ENCODE measurements at regions of chr2 and their contacts with region 1.

Region 1: DNA sequence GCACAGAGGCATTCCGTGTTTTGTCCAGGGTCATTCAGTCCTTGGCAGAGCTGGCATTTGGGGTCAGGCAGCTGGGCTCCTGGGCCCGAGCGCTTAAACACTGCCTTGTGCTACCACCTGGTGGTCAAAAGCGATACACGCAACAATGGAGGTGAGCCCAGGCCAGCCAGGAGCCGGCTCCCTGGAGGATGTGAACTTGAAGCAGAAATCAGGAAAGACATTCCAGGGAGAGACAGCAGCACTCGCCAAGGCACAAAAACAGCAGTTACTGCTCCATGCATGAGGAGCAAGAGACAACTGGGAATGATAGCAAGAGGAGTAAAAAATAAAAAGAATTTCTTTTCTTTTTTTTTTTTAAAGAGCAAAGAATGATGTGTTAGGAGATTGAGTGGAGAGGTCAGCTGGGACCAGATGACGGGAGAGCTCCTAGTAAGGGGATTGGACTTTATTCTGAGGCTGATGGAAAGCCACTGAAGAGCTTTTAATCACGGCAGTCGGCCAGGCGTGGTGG is 20.7 kb downstream of the SCYGR8 start:
- DNase-seq: peak; percentile 57 to 64 (median 59)
- ATAC-seq: peak; percentile 98
- H3K4me3 ChIP-seq: no peak overlapping the region
- H3K27ac ChIP-seq: no peak overlapping the region
- H3K4me1 ChIP-seq: peaks cover 0 to 4% of the 10 kb centered on the region in 2 experiments; a peak in 1 of 5 replicates
- H3K27me3 ChIP-seq: peaks cover 0 to 10% of the 10 kb centered on the region in 2 experiments; a peak in 2 of 5 replicates
- CTCF ChIP-seq: peak; percentile 62 to 75 (median 66)
- EP300 ChIP-seq: no peak
- POLR2A ChIP-seq: no peak
- RAD21 ChIP-seq: peak; percentile 80 to 82

Region 2: GRCh38 chr2:227033471-227034148 is 732.8 kb before region 1 on chr2:
- CTCF ChIA-PET with region 1: no interaction called
- POLR2A ChIA-PET with region 1: no interaction called
- in situ Hi-C with region 1: no loop called
- intact Hi-C with region 1: loop called (anchors 1 kb)
- DNase-seq: peak; percentile 28 to 57 (median 38)
- ATAC-seq: peak; percentile 94
- H3K4me3 ChIP-seq: no peak overlapping the region
- H3K27ac ChIP-seq: no peak overlapping the region
- H3K4me1 ChIP-seq: no peaks in the 10 kb centered on the region
- H3K27me3 ChIP-seq: no peaks in the 10 kb centered on the region
- CTCF ChIP-seq: peak; percentile 49 to 75 (median 63)
- EP300 ChIP-seq: no peak
- POLR2A ChIP-seq: no peak
- RAD21 ChIP-seq: peak in 1 of 2 experiments; percentile 42; a peak in 2 of 4 replicates

Region 3: DNA sequence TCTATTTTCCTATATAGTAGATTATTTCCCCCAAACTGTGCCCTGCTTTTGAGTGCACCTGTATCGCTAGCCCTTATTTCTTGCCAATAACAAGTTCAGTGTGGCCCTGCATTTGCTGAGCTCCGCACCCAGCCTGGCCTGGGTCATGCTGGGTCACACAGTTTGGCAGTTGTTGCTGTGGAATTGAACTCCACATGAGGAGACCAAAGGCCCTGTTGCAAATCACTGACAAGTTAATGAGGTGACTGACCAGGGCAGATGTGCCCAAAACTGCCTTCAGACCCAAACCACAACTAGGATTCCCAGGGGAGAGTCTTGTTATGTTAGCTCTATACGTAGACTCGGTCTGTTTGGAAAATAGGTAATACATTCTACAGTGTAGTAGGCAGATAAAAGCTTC is 633.4 kb before region 1 on chr2:
- CTCF ChIA-PET with region 1: interaction called, 10 read pairs
- POLR2A ChIA-PET with region 1: no interaction called
- in situ Hi-C with region 1: no loop called
- intact Hi-C with region 1: loop called (anchors 5 kb)
- DNase-seq: no peak
- ATAC-seq: no peak
- H3K4me3 ChIP-seq: no peak overlapping the region
- H3K27ac ChIP-seq: no peak overlapping the region
- H3K4me1 ChIP-seq: no peaks in the 10 kb centered on the region
- H3K27me3 ChIP-seq: peaks cover 0 to 19% of the 10 kb centered on the region in 2 experiments; a peak in 2 of 5 replicates
- CTCF ChIP-seq: no peak
- EP300 ChIP-seq: no peak
- POLR2A ChIP-seq: no peak
- RAD21 ChIP-seq: no peak

Region 4: DNA sequence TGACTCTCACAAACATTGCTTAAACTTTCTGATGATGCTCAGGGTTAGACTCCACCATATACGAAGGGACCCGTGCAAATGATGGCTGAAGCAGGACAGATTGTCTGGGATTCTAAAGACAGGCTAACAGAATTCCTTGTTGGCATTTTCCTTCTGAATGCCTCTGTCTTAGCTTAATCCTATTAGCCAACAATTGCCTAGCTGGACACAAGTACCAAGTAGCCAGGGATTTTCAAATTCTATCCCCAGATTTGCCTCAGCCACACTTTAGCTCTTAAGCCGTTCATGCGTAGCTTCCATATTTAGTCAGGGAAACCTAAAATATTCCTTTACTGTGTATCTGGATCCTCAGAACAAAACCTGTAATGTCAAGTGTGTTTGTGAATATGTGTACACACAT is 562.0 kb before region 1 on chr2:
- CTCF ChIA-PET with region 1: no interaction called
- POLR2A ChIA-PET with region 1: no interaction called
- in situ Hi-C with region 1: no loop called
- intact Hi-C with region 1: no loop called
- DNase-seq: no peak
- ATAC-seq: no peak
- H3K4me3 ChIP-seq: no peak overlapping the region
- H3K27ac ChIP-seq: no peak overlapping the region
- H3K4me1 ChIP-seq: no peaks in the 10 kb centered on the region
- H3K27me3 ChIP-seq: no peaks in the 10 kb centered on the region
- CTCF ChIP-seq: no peak
- EP300 ChIP-seq: no peak
- POLR2A ChIP-seq: no peak
- RAD21 ChIP-seq: no peak

Region 5: DNA sequence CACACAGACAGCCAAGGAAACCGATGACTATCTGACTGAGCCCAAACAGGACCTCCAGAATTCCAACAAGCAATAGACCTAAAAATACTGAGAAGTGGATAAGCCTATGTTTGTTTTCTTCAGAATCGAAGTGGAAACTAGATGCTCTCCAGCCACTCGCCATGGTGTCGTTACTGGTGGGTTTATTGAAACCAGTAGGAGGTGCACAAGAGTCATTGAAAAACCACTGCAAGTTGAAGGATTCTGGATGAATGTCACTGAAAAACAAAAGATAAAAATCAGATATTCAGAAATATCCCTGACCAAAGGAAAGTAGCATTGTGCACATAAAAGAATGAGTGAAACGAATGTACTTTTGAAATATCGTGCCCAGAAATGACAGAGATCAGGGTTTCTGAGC is 402.7 kb before region 1 on chr2:
- CTCF ChIA-PET with region 1: interaction called, 4 read pairs
- POLR2A ChIA-PET with region 1: no interaction called
- in situ Hi-C with region 1: no loop called
- intact Hi-C with region 1: loop called (anchors 2 kb)
- DNase-seq: peak in 2 of 4 experiments; percentile 7 to 44
- ATAC-seq: peak; percentile 80
- H3K4me3 ChIP-seq: no peak overlapping the region
- H3K27ac ChIP-seq: no peak overlapping the region
- H3K4me1 ChIP-seq: no peaks in the 10 kb centered on the region
- H3K27me3 ChIP-seq: no peaks in the 10 kb centered on the region; a peak in 1 of 5 replicates
- CTCF ChIP-seq: peak; percentile 47 to 62 (median 57); a peak in 5 of 6 replicates
- EP300 ChIP-seq: no peak
- POLR2A ChIP-seq: no peak
- RAD21 ChIP-seq: peak; percentile 50 to 64; a peak in 3 of 4 replicates

Region 6: DNA sequence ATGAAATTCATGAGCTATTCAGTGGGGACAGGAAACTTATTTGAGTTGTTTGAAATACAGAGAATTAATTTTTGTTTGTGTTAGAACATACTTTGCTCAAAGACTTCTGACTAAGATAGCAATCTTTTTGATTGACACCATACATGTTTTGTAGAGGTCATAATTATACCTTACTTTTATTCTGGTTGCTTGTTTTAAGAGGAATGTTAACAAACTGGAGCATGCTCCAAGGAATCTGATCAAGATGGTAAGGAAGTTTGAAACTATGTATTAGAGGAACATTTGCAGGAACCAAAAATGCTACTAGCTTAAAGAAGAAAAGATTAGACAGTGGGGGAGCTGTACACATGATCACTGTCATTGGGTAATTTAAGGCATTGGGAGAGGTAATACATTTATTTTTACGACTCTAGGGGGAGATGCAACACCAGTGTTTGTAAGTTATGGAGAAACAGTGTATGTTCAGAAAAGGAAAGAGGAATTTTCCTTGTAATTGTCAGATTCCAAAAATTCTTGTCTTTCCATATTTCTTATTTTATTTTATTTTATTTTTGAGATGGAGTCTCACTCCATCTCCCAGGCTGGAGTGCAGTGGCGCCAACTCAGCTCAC is 286.5 kb before region 1 on chr2:
- CTCF ChIA-PET with region 1: interaction called, 4 read pairs
- POLR2A ChIA-PET with region 1: no interaction called
- in situ Hi-C with region 1: no loop called
- intact Hi-C with region 1: loop called (anchors 5 kb)
- DNase-seq: peak; percentile 30 to 36 (median 32)
- ATAC-seq: peak; percentile 89
- H3K4me3 ChIP-seq: no peak overlapping the region
- H3K27ac ChIP-seq: no peak overlapping the region
- H3K4me1 ChIP-seq: peaks cover 2 to 3% of the 10 kb centered on the region in 2 experiments; a peak in 2 of 5 replicates
- H3K27me3 ChIP-seq: no peaks in the 10 kb centered on the region
- CTCF ChIP-seq: peak in 2 of 3 experiments; percentile 22 to 57; a peak in 3 of 6 replicates
- EP300 ChIP-seq: no peak
- POLR2A ChIP-seq: no peak
- RAD21 ChIP-seq: peak in 1 of 2 experiments; percentile 59; a peak in 3 of 4 replicates

Region 7: GRCh38 chr2:227655454-227655853 is 111.0 kb before region 1 on chr2:
- CTCF ChIA-PET with region 1: no interaction called
- POLR2A ChIA-PET with region 1: no interaction called
- in situ Hi-C with region 1: no loop called
- intact Hi-C with region 1: loop called (anchors 2 kb)
- DNase-seq: peak in 3 of 4 experiments; percentile 2 to 6 (median 5)
- ATAC-seq: no peak
- H3K4me3 ChIP-seq: no peak overlapping the region
- H3K27ac ChIP-seq: no peak overlapping the region
- H3K4me1 ChIP-seq: no peaks in the 10 kb centered on the region
- H3K27me3 ChIP-seq: no peaks in the 10 kb centered on the region
- CTCF ChIP-seq: no peak
- EP300 ChIP-seq: no peak
- POLR2A ChIP-seq: no peak
- RAD21 ChIP-seq: no peak

Region 8: DNA sequence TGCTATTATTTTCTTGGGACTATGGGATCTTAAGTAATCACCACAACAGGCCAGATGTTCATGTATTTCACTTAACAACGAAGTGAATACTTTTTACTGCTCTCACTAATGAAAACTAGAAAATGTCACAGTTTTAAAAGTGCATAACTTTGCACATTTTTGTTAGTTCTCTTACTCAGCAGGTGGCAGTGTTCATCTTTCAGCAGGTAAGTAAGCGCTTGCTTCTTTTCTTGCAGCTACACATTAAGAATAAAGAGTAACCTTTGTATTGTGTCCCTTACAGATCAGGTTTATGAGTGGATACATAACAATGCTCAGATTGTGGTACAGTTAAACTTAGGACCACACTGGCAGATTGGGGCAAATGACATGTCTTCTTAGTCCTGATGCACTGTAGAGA is 166.0 kb after region 1 on chr2:
- CTCF ChIA-PET with region 1: no interaction called
- POLR2A ChIA-PET with region 1: no interaction called
- in situ Hi-C with region 1: no loop called
- intact Hi-C with region 1: no loop called
- DNase-seq: no peak
- ATAC-seq: no peak
- H3K4me3 ChIP-seq: no peak overlapping the region
- H3K27ac ChIP-seq: no peak overlapping the region
- H3K4me1 ChIP-seq: no peaks in the 10 kb centered on the region
- H3K27me3 ChIP-seq: no peaks in the 10 kb centered on the region
- CTCF ChIP-seq: no peak
- EP300 ChIP-seq: no peak
- POLR2A ChIP-seq: no peak
- RAD21 ChIP-seq: 0 out of 4 replicates have a peak, but pooled peaks of 1 of the 2 experiments have one; percentile 12